Adrenal gland (tissue), 19 donors: ENCODE measurements at regions of chr10 and their contacts with region 1.

Region 1: GRCh38 chr10:37754538-37755323 is 102.7 kb downstream of the ZNF248 start:
- DNase-seq: peak; percentile 44 to 79 (median 65)
- H3K4me3 ChIP-seq: no peak overlapping the region
- H3K27ac ChIP-seq: no peak overlapping the region
- H3K4me1 ChIP-seq: no peaks in the 10 kb centered on the region
- H3K27me3 ChIP-seq: no peaks in the 10 kb centered on the region
- CTCF ChIP-seq: peak; percentile 60 to 78 (median 76)
- POLR2A ChIP-seq: no peak

Region 2: DNA sequence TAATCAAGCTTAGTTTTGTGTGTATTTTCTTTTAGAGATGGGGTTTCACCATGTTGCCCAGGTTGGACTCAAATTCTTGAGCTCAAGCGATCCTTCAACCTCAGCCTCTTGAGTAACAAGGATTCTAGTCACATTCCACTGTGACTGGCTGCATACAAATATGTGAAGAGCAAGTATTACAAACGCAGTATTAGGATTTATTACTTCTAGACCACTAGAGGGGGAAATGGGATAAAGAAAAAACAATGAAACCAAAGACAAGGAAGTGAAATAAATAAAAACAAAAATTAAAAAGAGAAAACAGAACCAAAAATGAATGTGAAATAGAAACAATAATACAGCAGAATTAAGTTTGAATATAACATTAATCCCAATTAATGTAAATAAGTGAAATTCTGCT is 320.6 kb before region 1 on chr10:
- intact Hi-C with region 1: loop called in 1 of 2 experiments (anchors 10 kb)
- DNase-seq: peak in 1 of 7 donors; percentile 5
- H3K4me3 ChIP-seq: no peak overlapping the region
- H3K27ac ChIP-seq: no peak overlapping the region
- H3K4me1 ChIP-seq: no peaks in the 10 kb centered on the region
- H3K27me3 ChIP-seq: no peaks in the 10 kb centered on the region
- CTCF ChIP-seq: peak; percentile 33 to 65 (median 48)
- POLR2A ChIP-seq: no peak

Region 3: GRCh38 chr10:37535459-37536246 is 219.1 kb before region 1 on chr10:
- intact Hi-C with region 1: loop called (anchors 10 kb)
- DNase-seq: no peak
- H3K4me3 ChIP-seq: no peak overlapping the region
- H3K27ac ChIP-seq: no peak overlapping the region
- H3K4me1 ChIP-seq: peaks cover 9 to 20% of the 10 kb centered on the region in 2 donors
- H3K27me3 ChIP-seq: no peaks in the 10 kb centered on the region
- CTCF ChIP-seq: no peak
- POLR2A ChIP-seq: no peak

Region 4: GRCh38 chr10:37865957-37866671 is 111.4 kb after region 1 on chr10:
- intact Hi-C with region 1: no loop called
- DNase-seq: no peak
- H3K4me3 ChIP-seq: no peak overlapping the region
- H3K27ac ChIP-seq: no peak overlapping the region
- H3K4me1 ChIP-seq: no peaks in the 10 kb centered on the region
- H3K27me3 ChIP-seq: no peaks in the 10 kb centered on the region
- CTCF ChIP-seq: no peak
- POLR2A ChIP-seq: no peak